Right ventricle myocardium superior (tissue), 1 donor: ENCODE measurements at regions of chr16 and their contacts with region 1.

Region 1: DNA sequence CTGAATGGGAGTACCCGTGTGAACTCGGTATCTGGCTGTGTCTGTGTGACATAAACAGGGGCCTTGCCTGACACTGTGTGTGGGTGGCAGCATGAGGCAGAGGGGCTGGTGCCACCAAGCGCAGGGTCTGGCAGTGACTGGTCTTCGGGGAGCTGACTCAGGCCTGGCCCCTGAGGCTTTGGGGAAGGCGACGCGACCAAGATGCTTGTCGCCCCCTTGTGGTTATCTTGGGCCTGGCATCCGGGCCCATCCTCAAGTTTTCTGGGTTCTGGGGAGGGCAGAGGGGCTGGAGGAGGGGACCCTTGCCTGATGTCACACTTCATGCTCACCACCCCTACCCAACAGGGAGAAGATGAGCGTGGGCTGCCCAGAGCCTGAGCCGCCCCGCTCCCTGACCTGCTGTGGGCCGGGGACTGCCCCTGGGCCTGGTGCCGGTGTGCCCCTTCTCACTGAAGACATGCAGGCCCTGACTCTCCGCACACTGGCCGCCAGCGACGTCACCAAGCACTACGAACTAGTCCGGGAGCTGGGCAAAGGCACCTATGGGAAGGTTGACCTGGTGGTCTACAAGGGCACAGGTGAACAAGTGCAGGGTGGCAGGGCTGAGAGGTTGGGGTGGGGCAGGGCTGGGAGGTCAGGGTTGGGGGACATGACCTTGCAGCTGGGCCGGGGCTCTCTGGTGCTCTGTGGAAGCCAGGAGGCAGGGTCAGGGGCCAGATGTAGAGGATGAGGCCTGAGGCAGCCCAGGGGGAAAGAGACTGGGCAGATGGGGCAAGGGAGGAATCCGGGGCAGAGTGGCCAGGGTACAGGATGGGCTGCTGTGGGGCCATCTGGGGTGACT is 24.9 kb downstream of the SBK1 start:
- DNase-seq: peak; percentile 67
- ATAC-seq: peak; percentile 56

Region 2: GRCh38 chr16:27977966-27978365 is 339.3 kb before region 1 on chr16:
- intact Hi-C with region 1: no loop called
- DNase-seq: peak; percentile 47
- ATAC-seq: peak; percentile 83

Region 3: GRCh38 chr16:28053461-28053860 is 263.8 kb before region 1 on chr16:
- intact Hi-C with region 1: no loop called
- DNase-seq: no peak
- ATAC-seq: no peak

Region 4: DNA sequence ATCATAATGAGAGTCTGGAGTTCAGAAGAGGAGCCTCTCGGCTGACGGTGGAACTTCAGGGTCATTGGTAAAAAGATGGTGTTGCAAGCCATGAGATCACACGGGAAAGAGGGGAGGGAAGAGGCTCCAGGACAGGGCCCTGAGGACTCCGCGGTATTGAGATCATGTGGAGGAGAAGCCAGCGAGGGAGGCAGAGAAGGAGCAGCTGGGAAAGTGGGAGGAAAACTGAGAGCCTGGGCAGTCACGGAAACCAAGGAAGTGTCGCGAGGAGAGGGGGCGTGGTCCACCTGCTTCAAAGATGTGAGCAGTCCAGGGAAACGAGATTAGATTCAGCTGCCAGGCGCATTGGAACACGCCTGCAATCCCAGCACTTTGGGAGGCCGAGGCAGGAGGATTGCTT is 52.6 kb before region 1 on chr16:
- intact Hi-C with region 1: no loop called
- DNase-seq: no peak
- ATAC-seq: no peak

Region 5: DNA sequence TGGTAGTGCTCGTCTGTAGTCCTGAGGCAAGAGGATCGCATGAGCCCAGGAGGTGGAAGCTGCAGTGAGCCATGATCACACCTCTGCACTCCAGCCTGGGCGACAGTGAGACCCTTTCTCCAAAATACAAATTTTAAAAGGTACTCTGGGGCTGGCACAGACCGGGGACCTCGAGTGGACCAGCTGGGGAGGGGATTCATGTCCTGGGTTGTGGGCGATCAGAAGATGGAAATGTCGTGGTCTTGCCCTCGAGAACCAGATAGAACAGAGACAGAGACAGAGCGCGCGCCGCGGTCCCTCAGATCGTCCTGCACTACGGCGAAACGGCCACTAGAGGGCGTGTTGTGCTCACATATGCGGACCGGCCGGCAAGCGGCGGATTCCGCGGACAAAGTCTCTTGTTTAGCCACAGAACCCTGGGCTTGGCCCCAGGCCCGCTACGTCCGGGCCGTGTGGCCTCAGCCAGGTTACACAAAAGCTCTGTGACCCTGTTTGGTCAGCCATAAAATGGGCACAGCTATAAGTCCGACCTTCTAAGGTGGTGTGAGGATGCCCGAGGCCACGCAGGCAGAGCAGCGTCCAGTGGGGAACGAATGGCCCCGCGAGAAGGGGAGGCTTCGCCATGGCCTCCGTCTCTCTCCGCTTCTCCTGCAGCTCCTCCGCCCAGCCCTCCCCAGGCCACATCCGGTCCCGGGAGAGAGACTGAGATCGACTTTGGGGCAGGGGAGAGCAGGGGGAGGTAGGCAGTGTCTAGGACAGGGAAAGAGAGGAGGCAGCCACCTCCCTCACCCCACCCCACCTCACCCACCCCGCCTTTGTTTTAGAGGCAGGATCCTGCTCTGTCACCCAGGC is 39.5 kb before region 1 on chr16:
- intact Hi-C with region 1: loop called (anchors 5 kb)
- DNase-seq: peak; percentile 95
- ATAC-seq: peak; percentile 96